ENCODE measurements at regions of chr3 and their contacts with region 1.

Region 1: DNA sequence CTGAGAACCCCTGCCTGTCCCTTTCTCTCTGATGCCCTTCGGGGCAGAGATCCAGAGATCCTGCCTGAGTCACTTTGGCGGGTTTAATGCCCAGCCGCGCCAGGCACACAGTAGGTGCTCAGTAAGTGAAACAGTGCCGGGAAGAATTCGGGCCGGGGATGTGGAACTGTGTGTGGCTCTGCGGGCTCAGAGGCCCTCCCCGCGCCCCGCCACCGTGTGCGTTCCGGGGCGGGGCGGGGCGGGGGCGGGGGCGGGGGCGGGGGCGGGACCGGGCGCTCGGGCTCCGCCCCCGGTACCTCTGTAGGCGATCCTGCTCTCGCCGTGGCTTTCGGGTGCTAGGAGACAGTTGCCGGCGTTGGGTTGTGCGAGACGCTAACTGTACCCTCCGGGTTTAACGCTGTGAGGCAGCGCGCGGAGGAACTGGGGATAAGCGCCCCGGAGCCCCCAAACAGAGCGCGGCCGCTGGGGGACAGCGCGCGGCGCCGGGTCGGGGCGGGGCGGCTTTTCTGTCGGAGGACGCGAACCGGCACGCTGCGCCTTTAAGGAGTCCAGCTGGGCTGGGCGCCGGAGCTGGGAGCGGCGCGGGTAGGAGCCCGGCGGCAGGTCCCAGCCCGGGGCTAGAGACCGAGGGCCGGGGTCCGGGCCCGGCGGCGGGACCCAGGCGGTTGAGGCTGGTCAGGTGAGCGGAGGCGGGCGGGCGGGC is at the start of gene ABHD6:
- DNase-seq: peak; percentile 73
- H3K4me3 ChIP-seq: peak within 1 kb of the TSS; percentile 82 to 87 (median 86)
- H3K27ac ChIP-seq: peak within 1 kb of the TSS; percentile 45
- H3K4me1 ChIP-seq: peaks cover 25% of the 10 kb centered on the region
- H3K27me3 ChIP-seq: no peaks in the 10 kb centered on the region
- CTCF ChIP-seq: peak in 1 of 2 donors; percentile 43
- total RNA-seq, gene ABHD6: 9.4 to 21.3 TPM

Region 2: DNA sequence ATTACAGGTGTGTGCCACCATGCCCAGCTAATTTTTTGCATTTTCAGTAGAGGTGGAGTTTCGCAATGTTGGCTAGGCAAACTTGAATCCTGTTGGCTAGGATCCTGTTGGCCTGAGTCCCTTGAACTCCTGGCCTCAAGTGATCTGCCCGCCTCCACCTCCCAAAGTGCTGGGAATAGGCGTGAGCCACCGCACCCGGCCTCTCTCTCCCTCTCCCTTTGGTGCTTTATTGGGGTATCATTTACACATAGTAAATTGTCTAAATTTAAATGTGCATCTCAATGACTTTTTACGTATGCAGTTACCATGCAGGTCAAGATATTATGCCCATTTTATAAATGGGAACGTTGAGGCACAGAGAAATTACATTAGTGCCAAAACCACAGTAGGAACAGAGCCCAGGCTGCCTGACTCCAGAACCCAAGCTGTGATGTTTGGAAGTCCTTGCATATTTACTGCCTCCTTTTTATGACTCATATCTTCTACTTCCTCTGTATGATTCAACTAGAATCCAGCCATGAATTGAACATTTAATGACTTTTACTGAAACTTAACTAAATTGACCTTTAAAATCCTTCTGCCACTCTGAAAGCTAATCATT is 34.6 kb after region 1 on chr3:
- CTCF ChIA-PET with region 1: no interaction called
- dilution Hi-C with region 1: no loop called
- in situ Hi-C with region 1: no loop called
- intact Hi-C with region 1: no loop called
- DNase-seq: peak; percentile 70
- H3K4me3 ChIP-seq: no peak overlapping the region
- H3K27ac ChIP-seq: peak overlapping the region; percentile 51
- H3K4me1 ChIP-seq: peaks cover 15% of the 10 kb centered on the region
- H3K27me3 ChIP-seq: no peaks in the 10 kb centered on the region
- CTCF ChIP-seq: no peak

Region 3: GRCh38 chr3:58299839-58300516 is 62.6 kb after region 1 on chr3:
- CTCF ChIA-PET with region 1: no interaction called
- dilution Hi-C with region 1: no loop called
- in situ Hi-C with region 1: loop called in 1 of 2 experiments (anchors 10 kb)
- intact Hi-C with region 1: loop called (anchors 1 kb)
- DNase-seq: peak; percentile 14
- H3K4me3 ChIP-seq: no peak overlapping the region
- H3K27ac ChIP-seq: no peak overlapping the region
- H3K4me1 ChIP-seq: no peaks in the 10 kb centered on the region
- H3K27me3 ChIP-seq: no peaks in the 10 kb centered on the region
- CTCF ChIP-seq: peak; percentile 52 to 63

Measured in mammary epithelial cell (primary cell).